Right ventricle myocardium inferior (tissue), 1 donor: ENCODE measurements at regions of chr17 and their contacts with region 1.

Region 1: DNA sequence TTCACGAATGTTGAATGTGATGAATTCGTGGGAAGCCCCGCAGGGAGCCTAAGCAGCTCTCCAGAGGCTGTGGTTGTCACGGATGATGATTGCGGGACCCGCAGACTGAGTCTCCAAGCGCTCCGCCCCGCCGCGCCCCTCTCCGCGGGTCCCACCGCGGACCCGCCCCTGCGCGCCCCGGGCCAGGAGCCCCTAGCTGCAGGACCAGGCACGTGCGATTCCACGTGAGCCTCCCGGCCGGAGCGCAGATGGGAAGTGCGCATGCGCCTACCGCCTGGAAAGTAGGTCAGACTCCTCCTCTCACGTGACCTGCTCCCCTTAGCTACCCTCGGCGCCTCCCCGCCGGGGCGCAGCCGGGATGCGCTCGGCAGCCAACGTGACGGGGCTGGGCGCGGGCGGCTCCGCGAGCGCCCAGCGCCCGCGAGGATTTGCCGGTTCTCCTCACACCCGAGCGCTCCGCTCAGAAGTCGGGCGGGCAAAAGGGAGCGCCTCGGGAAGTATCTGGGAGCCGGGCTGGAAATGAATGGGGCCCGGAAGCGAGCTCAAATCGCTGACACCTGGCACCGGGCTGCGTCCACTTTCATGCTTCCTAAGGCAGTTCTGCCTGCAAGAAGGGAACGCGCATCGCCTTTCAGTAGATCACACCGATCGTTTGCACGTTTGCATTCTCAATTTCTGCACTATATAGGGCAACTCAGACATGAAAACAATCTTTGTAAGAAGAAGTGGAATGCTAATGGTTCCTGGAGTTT is 26.4 kb upstream of the HLF start:
- DNase-seq: peak; percentile 95
- ATAC-seq: peak; percentile 99

Region 2: DNA sequence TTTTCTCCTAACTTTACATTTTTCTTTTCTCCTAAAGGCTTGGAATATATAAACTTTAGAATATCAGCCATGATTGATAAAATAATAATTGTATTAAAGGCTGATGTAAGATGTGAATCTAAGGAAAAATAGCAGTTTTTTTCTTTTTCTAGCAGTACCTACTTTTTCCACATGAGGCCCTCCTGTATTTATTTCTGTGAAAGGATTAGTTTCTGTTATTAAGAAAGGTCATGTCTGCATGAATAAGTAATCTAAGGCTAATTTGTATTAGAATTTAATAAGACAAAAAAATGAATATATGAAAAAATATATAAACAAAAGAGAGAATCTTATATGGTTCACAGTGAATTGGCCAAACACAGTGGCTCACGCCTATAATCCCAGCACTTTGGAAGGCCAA is 184.5 kb before region 1 on chr17:
- intact Hi-C with region 1: loop called (anchors 10 kb)
- DNase-seq: no peak
- ATAC-seq: no peak

Region 3: GRCh38 chr17:55157136-55157535 is 81.2 kb before region 1 on chr17:
- intact Hi-C with region 1: loop called (anchors 10 kb)
- DNase-seq: no peak
- ATAC-seq: peak; percentile 57

Region 4: GRCh38 chr17:55224746-55225145 is 13.6 kb before region 1 on chr17:
- intact Hi-C with region 1: no loop called
- DNase-seq: no peak
- ATAC-seq: no peak

Region 5: GRCh38 chr17:55264645-55265298 is 26.4 kb after region 1 on chr17 and contains the start of gene HLF:
- intact Hi-C with region 1: loop called (anchors 2 kb)
- DNase-seq: peak; percentile 91
- ATAC-seq: peak; percentile 95
- total RNA-seq, gene HLF: 35.7 TPM

Region 6: DNA sequence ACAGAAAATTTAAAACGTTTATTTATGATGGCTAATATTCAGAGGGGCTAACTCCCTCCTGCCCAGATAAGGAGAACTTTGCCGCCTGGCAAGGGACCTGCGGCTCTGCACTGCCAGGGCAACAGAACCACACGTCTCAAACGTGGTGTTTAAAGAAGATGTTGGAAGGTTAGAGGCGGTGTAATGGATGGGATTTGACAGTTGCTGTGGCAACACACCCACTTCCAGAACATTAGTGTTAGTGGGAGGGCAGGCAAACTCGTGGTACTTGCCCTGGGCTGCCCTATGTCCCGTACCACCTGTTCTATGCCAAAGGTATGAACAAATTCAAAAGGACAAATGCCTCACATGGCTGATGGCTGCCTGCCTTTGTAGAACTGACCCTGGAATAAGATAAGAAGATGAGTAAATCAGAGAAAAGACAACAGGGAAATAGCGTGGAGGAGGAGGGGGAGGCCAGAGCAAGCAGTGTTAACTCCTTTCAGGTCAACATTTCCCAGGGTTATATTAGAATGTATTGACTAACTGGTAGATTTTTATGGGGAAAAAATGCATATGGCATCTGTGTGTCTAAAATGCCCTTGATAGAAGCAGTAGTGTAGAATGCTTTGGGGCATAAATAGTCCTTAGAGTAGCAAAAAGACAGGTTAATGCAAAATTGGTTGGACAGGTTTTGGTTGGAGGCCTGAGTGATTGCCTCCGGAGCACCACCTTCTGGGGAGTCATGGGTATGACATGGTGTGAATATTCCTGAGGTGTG is 57.2 kb after region 1 on chr17:
- intact Hi-C with region 1: loop called (anchors 1 kb)
- DNase-seq: no peak
- ATAC-seq: peak; percentile 89